ENCODE measurements at regions of chr1 and their contacts with region 1.

Region 1: GRCh38 chr1:23809751-23810171 is 9.2 kb upstream of the GALE start:
- DNase-seq: peak; percentile 71 to 88 (median 77)
- H3K4me3 ChIP-seq: no peak overlapping the region
- H3K4me3 Mint-ChIP-seq: no peak overlapping the region
- H3K27ac ChIP-seq: no peak overlapping the region
- H3K27ac Mint-ChIP-seq: peak overlapping the region in 5 of 8 donors; percentile 23 to 81 (median 77)
- H3K4me1 ChIP-seq: peaks cover 18% of the 10 kb centered on the region
- H3K4me1 Mint-ChIP-seq: peaks cover 10 to 15% (median 14%) of the 10 kb centered on the region in 3 donors
- H3K27me3 ChIP-seq: no peaks in the 10 kb centered on the region
- H3K27me3 Mint-ChIP-seq: no peaks in the 10 kb centered on the region

Region 2: GRCh38 chr1:23601071-23601967 is 208.4 kb before region 1 on chr1:
- CTCF ChIA-PET with region 1: no interaction called
- POLR2A ChIA-PET with region 1: no interaction called
- DNase-seq: peak in 2 of 5 donors; percentile 41 to 67
- H3K4me3 ChIP-seq: peak overlapping the region; percentile 56
- H3K4me3 Mint-ChIP-seq: peak overlapping the region; percentile 66 to 84 (median 70)
- H3K27ac ChIP-seq: no peak overlapping the region
- H3K27ac Mint-ChIP-seq: peak overlapping the region; percentile 47 to 96 (median 84)
- H3K4me1 ChIP-seq: peaks cover 89% of the 10 kb centered on the region
- H3K4me1 Mint-ChIP-seq: peaks cover 71 to 82% (median 77%) of the 10 kb centered on the region in 3 donors
- H3K27me3 ChIP-seq: no peaks in the 10 kb centered on the region
- H3K27me3 Mint-ChIP-seq: no peaks in the 10 kb centered on the region

Region 3: GRCh38 chr1:23718482-23718881 is 91.3 kb before region 1 on chr1:
- CTCF ChIA-PET with region 1: no interaction called
- POLR2A ChIA-PET with region 1: no interaction called
- DNase-seq: no peak
- H3K4me3 ChIP-seq: no peak overlapping the region
- H3K4me3 Mint-ChIP-seq: no peak overlapping the region
- H3K27ac ChIP-seq: no peak overlapping the region
- H3K27ac Mint-ChIP-seq: peak overlapping the region in 5 of 8 donors; percentile 20 to 80 (median 76)
- H3K4me1 ChIP-seq: no peaks in the 10 kb centered on the region
- H3K4me1 Mint-ChIP-seq: peaks cover 12 to 14% (median 14%) of the 10 kb centered on the region in 3 donors
- H3K27me3 ChIP-seq: no peaks in the 10 kb centered on the region
- H3K27me3 Mint-ChIP-seq: no peaks in the 10 kb centered on the region

Region 4: GRCh38 chr1:23867953-23868556 is 58.3 kb after region 1 on chr1 and contains the start of gene FUCA1:
- CTCF ChIA-PET with region 1: interaction called, 19 read pairs
- POLR2A ChIA-PET with region 1: no interaction called
- DNase-seq: peak; percentile 95 to 98 (median 95)
- H3K4me3 ChIP-seq: peak within 1 kb of the TSS; percentile 61
- H3K4me3 Mint-ChIP-seq: peak within 1 kb of the TSS; percentile 82 to 93 (median 86)
- H3K27ac ChIP-seq: peak within 1 kb of the TSS; percentile 54
- H3K27ac Mint-ChIP-seq: peak within 1 kb of the TSS; percentile 42 to 95 (median 86)
- H3K4me1 ChIP-seq: peaks cover 22% of the 10 kb centered on the region
- H3K4me1 Mint-ChIP-seq: peaks cover 18 to 33% (median 22%) of the 10 kb centered on the region in 3 donors
- H3K27me3 ChIP-seq: no peaks in the 10 kb centered on the region
- H3K27me3 Mint-ChIP-seq: no peaks in the 10 kb centered on the region
- total RNA-seq, gene FUCA1: 14.1 to 15.7 TPM

Region 5: GRCh38 chr1:23916209-23917131 is 106.7 kb after region 1 on chr1:
- CTCF ChIA-PET with region 1: interaction called, 16 read pairs
- POLR2A ChIA-PET with region 1: no interaction called
- DNase-seq: peak; percentile 40 to 71 (median 62)
- H3K4me3 ChIP-seq: no peak overlapping the region
- H3K4me3 Mint-ChIP-seq: no peak overlapping the region
- H3K27ac ChIP-seq: no peak overlapping the region
- H3K27ac Mint-ChIP-seq: peak overlapping the region in 4 of 8 donors; percentile 57 to 91 (median 81)
- H3K4me1 ChIP-seq: peaks cover 27% of the 10 kb centered on the region
- H3K4me1 Mint-ChIP-seq: peaks cover 33 to 40% (median 35%) of the 10 kb centered on the region in 3 donors
- H3K27me3 ChIP-seq: no peaks in the 10 kb centered on the region
- H3K27me3 Mint-ChIP-seq: no peaks in the 10 kb centered on the region